HAP-1 (cell line): ENCODE measurements at regions of chr2 and their contacts with region 1.

Region 1: DNA sequence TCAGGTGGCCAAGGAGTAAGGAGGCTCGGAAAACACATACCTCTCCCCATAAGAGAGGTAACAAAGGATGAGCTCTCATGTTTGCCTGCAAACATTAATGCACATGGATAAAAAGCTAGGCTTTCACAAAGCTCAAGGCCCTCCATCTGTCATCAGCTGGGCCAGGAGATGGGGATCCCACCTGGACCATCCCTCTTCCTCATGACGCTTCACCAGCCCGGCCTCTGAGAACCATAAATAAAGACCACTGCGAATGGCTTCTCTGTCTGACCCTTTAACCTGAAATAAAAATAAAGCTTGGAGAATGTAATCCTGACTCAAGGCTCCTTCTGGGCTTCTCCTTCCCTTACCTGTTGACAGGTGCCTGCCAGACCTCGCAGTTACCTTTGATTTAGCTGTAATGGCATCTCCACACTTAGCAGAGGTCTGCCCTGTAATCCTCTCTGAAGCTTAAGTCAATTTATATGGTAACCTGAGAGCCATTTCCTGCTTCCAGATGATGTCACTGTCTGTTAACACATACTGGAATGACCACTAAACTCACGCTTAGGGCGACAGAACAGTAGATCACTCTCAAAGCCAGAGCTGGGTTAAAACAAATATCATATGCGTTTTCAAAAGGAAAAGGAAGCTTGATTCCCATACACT is 29.3 kb upstream of the FOXI3 start:
- DNase-seq: no peak
- H3K4me3 ChIP-seq: no peak overlapping the region
- H3K4me1 ChIP-seq: no peaks in the 10 kb centered on the region
- H3K27me3 ChIP-seq: peaks cover 3% of the 10 kb centered on the region; the same call in 1 of the 2 replicates

Region 2: DNA sequence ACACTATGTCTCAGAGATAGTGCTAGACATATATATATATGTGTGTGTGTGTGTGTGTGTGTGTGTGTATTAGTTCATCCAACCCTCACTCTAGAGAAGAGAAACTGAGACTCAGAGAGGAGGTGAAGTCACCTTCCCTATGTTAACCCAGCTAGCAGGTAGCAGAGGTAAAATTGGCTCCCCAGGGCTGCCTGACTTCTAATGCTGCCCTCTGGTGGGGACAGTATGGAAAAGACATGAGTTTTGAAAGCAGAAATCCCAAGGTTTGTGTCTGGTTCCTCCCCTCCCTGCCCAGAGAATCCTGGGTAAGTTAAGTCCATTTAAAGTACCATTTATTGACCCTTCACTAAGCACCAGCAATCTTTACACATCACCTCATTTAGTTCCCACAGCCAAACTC is 174.0 kb before region 1 on chr2:
- in situ Hi-C with region 1: no loop called
- DNase-seq: peak; percentile 16 to 46
- H3K4me3 ChIP-seq: no peak overlapping the region
- H3K4me1 ChIP-seq: no peaks in the 10 kb centered on the region
- H3K27me3 ChIP-seq: no peaks in the 10 kb centered on the region

Region 3: DNA sequence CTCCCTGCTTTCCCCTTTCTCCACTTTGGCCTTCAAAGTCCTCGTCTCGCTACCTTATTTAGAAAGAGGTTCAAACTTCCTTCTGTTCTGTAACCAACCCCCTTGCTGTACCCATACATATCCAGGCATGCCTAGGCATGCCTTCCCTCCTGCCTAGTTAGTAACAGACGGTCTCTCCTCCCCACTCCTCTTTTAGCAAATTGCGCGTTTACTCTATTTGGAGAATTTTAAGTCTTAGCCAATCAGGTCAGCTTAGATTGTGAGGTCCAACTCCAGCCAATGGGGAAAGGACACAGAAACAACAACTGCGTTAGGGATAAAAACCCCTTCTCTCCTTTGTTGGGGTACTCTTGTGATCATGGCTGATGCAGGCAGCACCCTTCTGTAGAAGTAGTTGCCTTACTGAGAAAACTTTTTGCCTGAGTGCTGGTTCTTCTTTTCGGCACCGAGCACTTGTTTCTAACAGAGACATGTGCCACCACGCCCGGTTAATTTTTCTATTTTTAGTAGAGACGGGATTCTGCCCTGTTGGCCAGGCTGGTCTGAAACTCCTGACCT is 56.6 kb after region 1 on chr2:
- in situ Hi-C with region 1: loop called (anchors 10 kb)
- DNase-seq: no peak
- H3K4me3 ChIP-seq: no peak overlapping the region
- H3K4me1 ChIP-seq: no peaks in the 10 kb centered on the region
- H3K27me3 ChIP-seq: no peaks in the 10 kb centered on the region

Region 4: DNA sequence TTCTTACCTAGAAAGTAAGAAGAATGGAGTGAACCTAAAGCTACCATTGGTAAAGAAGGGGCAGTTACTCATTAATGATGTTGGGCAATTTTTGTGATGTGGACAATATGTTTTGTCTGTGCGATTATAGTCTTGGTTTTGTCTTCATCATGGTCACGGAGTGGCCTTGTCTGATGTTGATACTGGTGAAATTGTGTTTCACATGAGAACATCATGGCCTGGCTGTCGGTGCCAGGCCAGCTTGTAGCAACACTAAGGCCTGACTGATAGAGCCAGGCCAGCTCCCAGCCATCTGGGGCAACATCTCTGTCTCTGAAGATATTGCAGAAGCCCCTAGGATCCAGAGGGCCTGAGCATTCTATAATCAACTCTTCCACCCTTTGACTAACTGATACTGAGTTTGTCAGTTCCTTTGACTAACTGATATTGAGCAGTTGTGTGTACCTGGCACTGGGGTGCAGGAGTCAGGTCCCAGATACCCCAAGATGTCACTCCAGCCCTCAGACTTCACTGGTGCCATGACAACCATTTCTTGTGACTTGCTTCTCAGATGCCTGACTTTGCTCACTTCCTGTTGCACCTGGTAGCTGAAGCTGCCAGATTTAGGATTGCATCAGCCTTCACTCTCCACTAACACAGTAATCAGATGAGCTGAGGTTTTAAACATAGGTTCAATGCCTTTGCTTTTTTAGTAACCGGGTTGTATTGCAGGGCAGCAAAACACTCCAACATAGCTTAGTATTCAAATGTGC is 272.2 kb after region 1 on chr2:
- in situ Hi-C with region 1: no loop called
- DNase-seq: no peak
- H3K4me3 ChIP-seq: no peak overlapping the region
- H3K4me1 ChIP-seq: no peaks in the 10 kb centered on the region
- H3K27me3 ChIP-seq: no peaks in the 10 kb centered on the region